Endothelial cell of umbilical vein (primary cell): ENCODE measurements at regions of chr6 and their contacts with region 1.

Region 1: GRCh38 chr6:13574149-13574570 is 241 bp upstream of the SIRT5 start:
- DNase-seq: peak; percentile 96
- H3K4me3 ChIP-seq: peak overlapping the region; percentile 54 to 88 (median 75)
- H3K27ac ChIP-seq: peak overlapping the region; percentile 80
- H3K4me1 ChIP-seq: peaks cover 8% of the 10 kb centered on the region
- H3K27me3 ChIP-seq: no peaks in the 10 kb centered on the region
- CTCF ChIP-seq: peak in 1 of 2 donors; percentile 40
- POLR2A ChIP-seq: peak; percentile 72

Region 2: DNA sequence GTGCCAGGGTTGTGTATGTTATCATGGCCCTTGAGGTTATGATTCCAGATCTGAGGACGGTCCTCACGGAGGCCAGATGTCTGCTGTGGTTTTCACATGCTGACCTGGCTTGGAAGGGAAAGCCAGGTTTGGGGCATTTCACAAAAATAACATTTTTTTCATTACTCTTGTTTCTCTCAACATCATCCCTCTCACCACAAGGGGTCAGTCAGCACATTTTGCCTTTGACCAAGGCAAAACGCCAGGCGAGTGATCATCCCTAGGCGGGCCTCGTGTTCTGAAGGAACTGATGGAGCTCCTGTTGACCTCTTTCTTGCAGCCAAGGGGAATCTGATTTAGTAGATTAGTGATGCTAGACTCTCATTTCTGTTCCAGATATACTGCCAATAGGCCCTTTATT is 379.3 kb before region 1 on chr6:
- CTCF ChIA-PET with region 1: interaction called, 6 read pairs
- POLR2A ChIA-PET with region 1: no interaction called
- dilution Hi-C with region 1: no loop called
- intact Hi-C with region 1: loop called (anchors 1 kb)
- DNase-seq: peak; percentile 69
- H3K4me3 ChIP-seq: no peak overlapping the region
- H3K27ac ChIP-seq: no peak overlapping the region
- H3K4me1 ChIP-seq: no peaks in the 10 kb centered on the region
- H3K27me3 ChIP-seq: no peaks in the 10 kb centered on the region
- CTCF ChIP-seq: peak; percentile 51 to 72
- POLR2A ChIP-seq: no peak

Region 3: GRCh38 chr6:13342414-13343019 is 231.6 kb before region 1 on chr6:
- CTCF ChIA-PET with region 1: interaction called, 28 read pairs
- POLR2A ChIA-PET with region 1: no interaction called
- dilution Hi-C with region 1: loop called (anchors 25 kb)
- intact Hi-C with region 1: no loop called
- DNase-seq: no peak
- H3K4me3 ChIP-seq: no peak overlapping the region
- H3K27ac ChIP-seq: no peak overlapping the region
- H3K4me1 ChIP-seq: no peaks in the 10 kb centered on the region
- H3K27me3 ChIP-seq: no peaks in the 10 kb centered on the region
- CTCF ChIP-seq: no peak
- POLR2A ChIP-seq: no peak

Region 4: GRCh38 chr6:13422681-13423221 is 151.4 kb before region 1 on chr6:
- CTCF ChIA-PET with region 1: interaction called, 8 read pairs
- POLR2A ChIA-PET with region 1: no interaction called
- dilution Hi-C with region 1: no loop called
- intact Hi-C with region 1: loop called (anchors 1 kb)
- DNase-seq: peak; percentile 95
- H3K4me3 ChIP-seq: peak overlapping the region in 1 of 3 experiments; percentile 19
- H3K27ac ChIP-seq: peak overlapping the region; percentile 92
- H3K4me1 ChIP-seq: peaks cover 44% of the 10 kb centered on the region
- H3K27me3 ChIP-seq: no peaks in the 10 kb centered on the region
- CTCF ChIP-seq: no peak
- POLR2A ChIP-seq: no peak

Region 5: DNA sequence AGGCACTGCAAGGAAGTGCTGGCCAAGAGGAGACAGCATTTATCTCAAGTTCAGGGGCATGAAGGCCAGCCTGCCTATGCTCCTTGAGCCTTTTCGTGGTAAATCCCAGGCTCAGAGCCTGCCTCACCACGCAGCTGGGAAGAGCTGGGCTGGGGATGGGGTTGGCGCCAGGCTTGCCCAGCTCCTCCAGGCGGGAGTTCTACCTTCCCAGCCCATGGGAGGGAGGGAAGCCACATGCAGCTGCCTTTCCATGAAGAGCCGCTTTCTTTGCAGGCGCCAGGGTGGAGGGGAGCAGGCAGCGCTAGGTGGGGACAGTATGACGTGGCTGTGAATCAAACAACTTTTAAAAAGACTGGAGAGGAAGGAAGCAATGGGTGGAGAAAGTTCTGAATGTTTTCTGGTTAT is 19.2 kb before region 1 on chr6:
- CTCF ChIA-PET with region 1: interaction called, 62 read pairs
- POLR2A ChIA-PET with region 1: interaction called, 4 read pairs
- dilution Hi-C with region 1: no loop called
- intact Hi-C with region 1: loop called (anchors 1 kb)
- DNase-seq: peak; percentile 70
- H3K4me3 ChIP-seq: no peak overlapping the region
- H3K27ac ChIP-seq: no peak overlapping the region
- H3K4me1 ChIP-seq: peaks cover 10% of the 10 kb centered on the region
- H3K27me3 ChIP-seq: no peaks in the 10 kb centered on the region
- CTCF ChIP-seq: no peak
- POLR2A ChIP-seq: peak; percentile 29

Region 6: DNA sequence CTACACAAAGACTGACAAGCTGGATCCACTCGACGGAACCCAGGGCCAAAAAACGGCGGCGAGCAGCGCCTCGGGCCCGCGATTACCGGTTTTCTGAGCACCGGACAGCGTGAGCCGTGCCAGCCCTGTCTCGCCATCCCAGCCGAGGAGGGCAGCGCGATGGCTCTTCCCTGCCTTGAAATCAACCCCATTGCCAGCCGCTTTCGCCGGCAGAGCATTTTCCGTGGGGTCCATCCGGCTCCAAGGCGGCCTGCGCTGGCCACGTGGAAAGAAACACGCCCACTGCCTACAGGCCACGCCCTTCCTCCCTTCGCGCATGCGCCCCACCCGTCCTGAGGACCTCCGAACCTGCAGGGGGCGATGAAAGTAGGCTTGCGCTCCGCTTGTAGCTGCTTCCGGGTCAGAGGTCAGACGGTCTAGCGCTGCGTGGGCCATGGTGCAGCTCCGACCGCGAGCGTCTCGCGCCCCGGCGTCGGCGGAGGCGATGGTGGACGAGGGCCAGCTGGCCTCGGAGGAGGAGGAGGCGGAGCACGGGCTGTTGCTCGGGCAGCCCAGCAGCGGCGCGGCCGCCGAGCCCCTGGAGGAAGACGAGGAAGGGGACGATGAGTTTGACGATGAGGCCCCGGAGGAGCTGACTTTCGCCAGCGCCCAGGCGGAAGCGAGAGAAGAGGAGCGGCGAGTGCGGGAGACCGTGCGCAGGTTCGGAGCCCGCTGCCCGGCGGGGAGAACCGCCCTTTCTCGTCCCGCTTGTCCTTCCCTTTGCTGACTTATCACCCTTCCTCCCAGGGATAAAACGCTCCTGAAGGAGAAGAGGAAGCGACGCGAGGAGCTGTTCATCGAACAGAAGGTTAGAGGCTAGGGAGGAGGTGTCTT is 41.0 kb after region 1 on chr6 and contains the start of gene NOL7:
- CTCF ChIA-PET with region 1: interaction called, 42 read pairs
- POLR2A ChIA-PET with region 1: interaction called, 7 read pairs
- dilution Hi-C with region 1: no loop called
- intact Hi-C with region 1: loop called (anchors 1 kb)
- DNase-seq: peak; percentile 98
- H3K4me3 ChIP-seq: peak within 1 kb of the TSS; percentile 89 to 99 (median 98)
- H3K27ac ChIP-seq: peak within 1 kb of the TSS; percentile 78
- H3K4me1 ChIP-seq: peaks cover 17% of the 10 kb centered on the region
- H3K27me3 ChIP-seq: no peaks in the 10 kb centered on the region
- CTCF ChIP-seq: peak; percentile 97 to 98
- POLR2A ChIP-seq: peak; percentile 67
- total RNA-seq, gene NOL7: 75.6 and 80.0 TPM in 2 replicates